Panc1 (cell line): ENCODE measurements at regions of chr16 and their contacts with region 1.

Region 1: GRCh38 chr16:30609926-30610839 is at the start of gene ZNF689:
- DNase-seq: peak; percentile 96
- ATAC-seq: peak; percentile 97
- H3K4me3 ChIP-seq: peak within 1 kb of the TSS; percentile 79 to 90
- H3K27ac ChIP-seq: peak within 1 kb of the TSS; percentile 98
- H3K4me1 ChIP-seq: peaks cover 14% of the 10 kb centered on the region
- H3K27me3 ChIP-seq: no peaks in the 10 kb centered on the region
- CTCF ChIP-seq: no peak
- total RNA-seq, gene ZNF689: 16.5 TPM

Region 2: DNA sequence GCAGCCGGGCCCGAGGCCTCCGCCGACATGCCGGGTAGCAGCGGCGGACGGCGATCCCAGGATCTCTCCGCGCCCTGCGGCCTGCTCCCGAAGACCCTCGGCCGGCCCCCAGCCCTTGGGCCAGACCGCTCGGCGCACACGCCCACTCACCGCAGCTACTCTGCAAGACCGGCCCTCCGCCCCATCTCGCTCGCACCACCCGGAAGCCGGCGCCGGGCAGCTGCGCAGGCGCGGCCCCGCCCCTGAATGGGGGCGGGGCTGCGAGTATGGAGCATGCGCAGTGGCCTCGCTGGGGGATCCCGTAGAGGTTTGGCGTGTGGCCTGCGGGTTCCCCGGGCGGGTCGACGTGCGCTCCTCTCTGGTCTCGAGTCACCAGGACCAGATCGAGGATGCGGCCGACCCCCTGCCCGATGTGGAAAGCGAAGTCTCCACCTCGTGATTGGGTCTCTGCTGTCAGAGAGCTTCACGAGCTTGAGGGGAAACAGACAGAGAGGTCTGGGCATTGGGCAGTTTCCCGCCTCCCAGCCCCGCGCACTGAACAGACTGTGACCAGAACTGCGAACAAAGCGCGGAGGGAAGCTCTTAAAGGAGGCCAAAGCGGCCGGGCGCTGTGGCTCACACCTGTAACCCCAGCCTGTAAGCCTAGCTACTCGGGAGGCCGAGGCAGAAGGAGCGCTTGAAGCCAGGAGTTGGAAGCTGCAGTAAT is 684.0 kb before region 1 on chr16 and contains the start of gene KCTD13:
- CTCF ChIA-PET with region 1: no interaction called
- POLR2A ChIA-PET with region 1: no interaction called
- in situ Hi-C with region 1: no loop called
- intact Hi-C with region 1: no loop called
- DNase-seq: no peak
- ATAC-seq: peak; percentile 97
- H3K4me3 ChIP-seq: peak within 1 kb of the TSS; percentile 59 to 88
- H3K27ac ChIP-seq: peak within 1 kb of the TSS; percentile 97
- H3K4me1 ChIP-seq: peaks cover 14% of the 10 kb centered on the region
- H3K27me3 ChIP-seq: no peaks in the 10 kb centered on the region
- CTCF ChIP-seq: no peak
- total RNA-seq, gene KCTD13: 45.7 TPM

Region 3: DNA sequence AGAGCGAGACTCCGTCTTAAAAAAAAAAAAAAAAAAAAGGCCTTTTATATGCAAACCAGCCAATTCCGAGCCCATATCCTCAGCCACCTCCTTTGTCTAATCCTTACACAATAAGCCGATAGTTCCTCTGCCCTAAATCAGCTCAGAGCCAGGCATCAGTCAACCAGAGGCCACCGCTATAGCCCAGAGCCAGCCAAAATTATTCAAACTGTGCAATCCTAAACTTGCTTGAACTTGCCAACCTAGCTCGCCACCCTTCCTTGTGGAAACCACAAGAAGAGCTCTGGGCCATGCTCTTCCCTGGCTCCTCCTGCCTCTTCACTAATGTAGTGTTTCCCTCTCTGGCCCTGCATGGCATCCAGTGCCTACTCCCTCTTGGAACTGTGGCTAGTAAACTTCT is 120.0 kb before region 1 on chr16:
- CTCF ChIA-PET with region 1: no interaction called
- POLR2A ChIA-PET with region 1: interaction called, 17 read pairs
- in situ Hi-C with region 1: no loop called
- intact Hi-C with region 1: no loop called
- DNase-seq: no peak
- ATAC-seq: no peak
- H3K4me3 ChIP-seq: no peak overlapping the region
- H3K27ac ChIP-seq: no peak overlapping the region
- H3K4me1 ChIP-seq: 0 out of 2 replicates have a peak, but pooled peaks cover 3% of the 10 kb centered on the region
- H3K27me3 ChIP-seq: no peaks in the 10 kb centered on the region
- CTCF ChIP-seq: no peak

Region 4: DNA sequence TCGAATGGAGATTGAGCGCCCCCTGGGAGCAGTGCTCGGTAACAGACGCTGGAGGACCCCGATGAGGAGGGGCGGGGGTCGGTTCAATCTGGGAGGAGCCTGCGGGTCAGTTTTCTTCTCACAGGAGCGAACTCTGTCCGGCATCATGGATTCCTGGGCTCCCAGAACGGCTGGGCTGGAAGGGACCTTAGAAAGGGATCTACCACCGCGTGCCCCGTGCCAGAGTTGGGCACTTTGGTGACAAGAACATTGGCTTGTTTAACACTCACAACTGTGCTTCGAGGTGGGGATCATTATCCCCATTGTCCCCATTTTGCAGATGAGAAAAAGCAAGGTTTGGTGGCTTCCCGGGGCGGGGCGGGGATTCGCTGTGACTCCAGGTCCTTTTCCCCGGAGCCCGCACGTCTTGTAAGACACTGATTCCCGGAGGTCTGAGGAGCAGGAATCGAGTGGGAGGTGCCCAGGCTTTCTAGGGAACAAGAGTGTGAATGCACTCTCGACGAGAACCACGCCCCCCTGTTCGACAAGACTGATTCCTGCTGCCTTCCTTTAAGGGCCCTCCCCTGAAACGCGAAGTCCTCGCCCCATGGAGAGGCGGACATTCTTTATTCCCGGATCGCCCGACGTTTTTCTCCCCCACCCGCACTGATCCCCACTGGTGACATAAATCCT is 311.7 kb after region 1 on chr16:
- CTCF ChIA-PET with region 1: no interaction called
- POLR2A ChIA-PET with region 1: no interaction called
- in situ Hi-C with region 1: no loop called
- intact Hi-C with region 1: no loop called
- DNase-seq: no peak
- ATAC-seq: peak; percentile 47
- H3K4me3 ChIP-seq: peak overlapping the region; percentile 82 to 91
- H3K27ac ChIP-seq: peak overlapping the region; percentile 88
- H3K4me1 ChIP-seq: peaks cover 9% of the 10 kb centered on the region
- H3K27me3 ChIP-seq: no peaks in the 10 kb centered on the region
- CTCF ChIP-seq: peak; percentile 91; the same call in 1 of the 2 replicates